ENCODE measurements at regions of chr2 and their contacts with region 1.

Region 1: DNA sequence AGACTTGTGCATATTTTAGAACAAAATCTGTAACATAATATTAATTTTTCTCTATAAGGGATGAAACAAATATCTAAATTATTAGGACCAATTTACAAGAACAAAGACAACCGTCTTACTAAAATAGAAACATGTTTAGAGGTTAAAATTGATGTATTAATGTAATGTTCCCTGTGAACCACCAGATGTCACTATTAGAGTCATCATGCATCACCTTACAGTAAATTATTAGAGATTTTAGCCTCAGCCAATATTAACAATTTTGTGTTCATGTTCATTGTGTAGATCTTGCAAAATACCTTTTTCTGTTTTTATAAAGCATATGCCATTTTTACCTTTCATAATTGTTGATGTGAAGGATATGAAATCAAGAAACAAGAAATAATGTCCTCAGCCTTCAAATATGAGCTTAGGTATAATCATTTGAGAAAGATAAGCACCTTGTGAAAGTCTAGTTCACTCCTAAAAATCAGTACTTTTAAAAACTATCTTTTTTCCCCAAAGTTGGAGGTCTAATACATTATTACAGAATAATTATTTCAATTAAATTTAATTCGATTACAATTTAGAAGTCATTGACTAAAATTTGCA is 344.3 kb upstream of the KCNH7 start:
- DNase-seq: peak; percentile 19
- H3K4me3 ChIP-seq: no peak overlapping the region
- H3K27ac ChIP-seq: no peak overlapping the region
- H3K4me1 ChIP-seq: no peaks in the 10 kb centered on the region
- H3K27me3 ChIP-seq: no peaks in the 10 kb centered on the region
- CTCF ChIP-seq: peak; percentile 70
- EP300 ChIP-seq: no peak
- RAD21 ChIP-seq: peak; percentile 63

Region 2: DNA sequence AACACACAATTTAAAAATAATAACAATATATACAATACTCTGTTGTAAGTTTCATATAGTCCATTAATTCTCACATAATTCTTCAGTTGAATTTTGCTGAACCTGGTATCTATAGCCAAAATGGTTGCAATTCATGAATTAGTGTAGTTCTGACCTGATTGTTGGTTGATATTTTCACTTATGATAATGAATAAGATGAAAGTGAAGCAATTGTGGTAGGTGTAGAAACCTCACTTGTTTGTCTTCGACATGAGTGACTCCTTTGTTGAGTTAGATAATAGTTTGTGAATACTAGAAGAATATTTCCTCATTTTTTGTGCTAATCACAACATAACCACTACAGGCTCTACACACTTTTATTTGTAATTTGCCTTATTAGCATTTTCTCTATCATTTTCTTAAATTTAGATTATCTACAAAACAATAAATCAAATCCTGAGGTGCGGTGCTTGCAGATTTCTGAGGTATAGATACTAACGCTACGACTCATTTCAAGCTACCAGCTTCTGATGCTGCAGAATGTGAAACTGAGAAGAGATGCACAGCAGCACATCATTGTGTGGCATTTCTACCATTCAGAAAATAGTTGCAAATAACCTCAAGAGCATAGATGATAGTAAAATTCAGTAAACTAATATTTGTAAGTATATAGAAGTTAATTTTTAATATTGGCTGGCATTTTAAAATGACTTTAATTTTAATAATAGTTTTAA is 462.1 kb before region 1 on chr2:
- CTCF ChIA-PET with region 1: no interaction called
- POLR2A ChIA-PET with region 1: no interaction called
- DNase-seq: no peak
- H3K4me3 ChIP-seq: no peak overlapping the region
- H3K27ac ChIP-seq: no peak overlapping the region
- H3K4me1 ChIP-seq: no peaks in the 10 kb centered on the region
- H3K27me3 ChIP-seq: no peaks in the 10 kb centered on the region
- CTCF ChIP-seq: no peak
- EP300 ChIP-seq: no peak
- RAD21 ChIP-seq: no peak

Region 3: GRCh38 chr2:163155279-163155883 is 27.5 kb before region 1 on chr2:
- CTCF ChIA-PET with region 1: interaction called, 10 read pairs
- POLR2A ChIA-PET with region 1: no interaction called
- DNase-seq: peak; percentile 33
- H3K4me3 ChIP-seq: no peak overlapping the region
- H3K27ac ChIP-seq: no peak overlapping the region
- H3K4me1 ChIP-seq: peaks cover 0 to 3% of the 10 kb centered on the region in 2 experiments; a peak in 1 of 4 replicates
- H3K27me3 ChIP-seq: no peaks in the 10 kb centered on the region
- CTCF ChIP-seq: peak; percentile 73
- EP300 ChIP-seq: no peak
- RAD21 ChIP-seq: peak; percentile 71

Region 4: GRCh38 chr2:164430166-164430783 is 1247.4 kb after region 1 on chr2:
- CTCF ChIA-PET with region 1: interaction called, 15 read pairs
- POLR2A ChIA-PET with region 1: no interaction called
- DNase-seq: peak; percentile 17
- H3K4me3 ChIP-seq: no peak overlapping the region; a peak in 1 of 4 replicates
- H3K27ac ChIP-seq: no peak overlapping the region
- H3K4me1 ChIP-seq: no peaks in the 10 kb centered on the region
- H3K27me3 ChIP-seq: no peaks in the 10 kb centered on the region
- CTCF ChIP-seq: peak; percentile 78
- EP300 ChIP-seq: no peak
- RAD21 ChIP-seq: peak; percentile 86

Region 5: GRCh38 chr2:164479460-164479859 is 1296.6 kb after region 1 on chr2:
- CTCF ChIA-PET with region 1: interaction called, 46 read pairs
- POLR2A ChIA-PET with region 1: no interaction called
- DNase-seq: peak; percentile 22
- H3K4me3 ChIP-seq: no peak overlapping the region
- H3K27ac ChIP-seq: no peak overlapping the region
- H3K4me1 ChIP-seq: no peaks in the 10 kb centered on the region
- H3K27me3 ChIP-seq: no peaks in the 10 kb centered on the region
- CTCF ChIP-seq: peak; percentile 66
- EP300 ChIP-seq: no peak
- RAD21 ChIP-seq: peak; percentile 94

Region 6: GRCh38 chr2:164538240-164538866 is 1355.5 kb after region 1 on chr2:
- CTCF ChIA-PET with region 1: interaction called, 25 read pairs
- POLR2A ChIA-PET with region 1: no interaction called
- DNase-seq: peak; percentile 55
- H3K4me3 ChIP-seq: no peak overlapping the region; a peak in 1 of 4 replicates
- H3K27ac ChIP-seq: no peak overlapping the region
- H3K4me1 ChIP-seq: peaks cover 3 to 7% of the 10 kb centered on the region in 2 experiments; a peak in 3 of 4 replicates
- H3K27me3 ChIP-seq: no peaks in the 10 kb centered on the region
- CTCF ChIP-seq: peak; percentile 77
- EP300 ChIP-seq: no peak
- RAD21 ChIP-seq: peak; percentile 81